Dendritic cell treated with granulocyte-macrophage colony-stimulating factor and Interleukin-4, amounts not matched to agents 40 ng/mL and 50 ng/mL, for 4 days (primary cell): ENCODE measurements at regions of chr5 and their contacts with region 1.

Region 1: DNA sequence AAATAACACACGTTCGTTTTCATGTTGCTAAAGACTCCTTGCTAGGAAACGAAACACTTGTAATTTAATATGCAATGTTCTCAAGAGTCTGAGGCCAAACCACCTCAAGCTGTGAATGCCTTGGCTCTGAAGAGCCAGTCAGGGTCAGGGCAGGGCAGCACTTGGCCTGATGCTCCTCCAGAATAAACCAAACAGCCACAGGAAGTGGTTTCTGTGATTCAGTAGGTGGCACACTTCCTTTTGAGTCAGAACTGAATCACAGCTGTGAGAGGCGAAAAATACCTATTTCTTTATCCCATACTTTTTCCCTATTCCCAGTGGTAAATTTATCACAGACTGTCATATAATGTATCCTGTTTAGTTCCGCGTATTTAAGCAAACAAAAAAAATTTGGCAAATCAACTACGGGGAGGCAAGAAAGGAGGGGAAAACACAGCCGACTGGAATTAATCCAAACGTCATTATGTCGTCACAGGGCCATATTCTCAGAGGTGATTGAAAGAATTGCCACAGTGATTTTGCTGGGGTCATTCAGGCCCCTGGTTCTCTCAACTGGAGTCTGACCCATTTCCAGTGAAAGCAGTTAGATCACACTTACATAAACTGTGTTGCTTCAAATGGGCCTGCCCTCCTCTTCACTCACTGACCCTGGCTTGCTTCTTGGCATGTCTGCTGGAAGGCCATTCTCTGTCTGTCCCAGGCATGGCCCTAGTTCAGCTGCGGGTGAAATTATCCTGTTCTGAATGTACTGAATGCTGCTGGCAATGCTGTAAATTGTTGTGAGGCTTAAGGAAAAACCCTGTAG is 71.2 kb downstream of the ARRDC3 start:
- H3K4me3 Mint-ChIP-seq: peak overlapping the region; percentile 42
- H3K27ac Mint-ChIP-seq: peak overlapping the region; percentile 94
- H3K4me1 Mint-ChIP-seq: peaks cover 57% of the 10 kb centered on the region
- H3K27me3 Mint-ChIP-seq: no peaks in the 10 kb centered on the region

Region 2: DNA sequence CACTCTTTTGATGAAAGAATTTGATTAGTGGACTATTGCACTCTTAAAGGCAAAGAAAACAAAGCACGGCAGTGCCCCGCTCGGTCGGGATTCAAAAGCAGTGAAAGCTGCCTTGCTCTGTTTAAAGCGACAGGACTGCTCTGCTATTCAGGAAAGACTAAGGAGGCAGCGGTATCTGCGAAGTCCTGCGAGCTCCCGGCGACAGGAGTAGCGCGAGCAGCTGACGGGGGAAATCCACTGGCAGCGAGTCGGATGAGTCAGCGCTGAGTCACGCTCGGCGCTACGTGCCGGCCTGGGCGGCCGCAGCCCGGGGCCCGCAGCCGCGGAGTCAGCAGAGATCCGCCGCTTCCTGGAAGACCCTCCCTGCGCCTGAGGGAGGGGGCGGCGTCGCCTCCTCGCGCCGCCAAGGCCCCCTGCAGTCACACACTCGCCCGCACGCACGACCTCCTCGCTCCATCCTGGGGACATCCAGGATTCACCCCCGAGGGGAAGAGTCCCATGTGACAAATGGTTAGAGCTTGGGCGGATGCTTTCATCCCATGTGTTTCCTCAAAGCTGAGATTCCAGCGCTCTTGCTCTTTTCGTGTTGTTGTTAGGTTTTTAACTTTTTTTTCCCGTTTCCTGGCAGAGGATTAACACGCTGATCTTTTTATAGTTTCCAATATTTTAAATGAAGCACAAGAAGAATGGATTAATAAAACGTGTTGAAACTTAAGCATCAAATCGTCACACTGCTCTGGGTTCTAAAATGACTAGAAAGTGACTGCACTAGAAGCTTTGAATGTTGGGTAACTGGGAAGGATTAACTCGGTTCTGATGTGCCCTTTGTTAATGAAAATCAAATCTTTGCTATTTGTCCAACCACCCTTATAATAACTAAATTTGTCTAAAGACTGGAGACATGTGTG is 31.3 kb before region 1 on chr5:
- intact Hi-C with region 1: loop called (anchors 2 kb)
- H3K4me3 Mint-ChIP-seq: peak overlapping the region; percentile 81
- H3K27ac Mint-ChIP-seq: peak overlapping the region; percentile 100
- H3K4me1 Mint-ChIP-seq: peaks cover 54% of the 10 kb centered on the region
- H3K27me3 Mint-ChIP-seq: peaks cover 1% of the 10 kb centered on the region

Region 3: DNA sequence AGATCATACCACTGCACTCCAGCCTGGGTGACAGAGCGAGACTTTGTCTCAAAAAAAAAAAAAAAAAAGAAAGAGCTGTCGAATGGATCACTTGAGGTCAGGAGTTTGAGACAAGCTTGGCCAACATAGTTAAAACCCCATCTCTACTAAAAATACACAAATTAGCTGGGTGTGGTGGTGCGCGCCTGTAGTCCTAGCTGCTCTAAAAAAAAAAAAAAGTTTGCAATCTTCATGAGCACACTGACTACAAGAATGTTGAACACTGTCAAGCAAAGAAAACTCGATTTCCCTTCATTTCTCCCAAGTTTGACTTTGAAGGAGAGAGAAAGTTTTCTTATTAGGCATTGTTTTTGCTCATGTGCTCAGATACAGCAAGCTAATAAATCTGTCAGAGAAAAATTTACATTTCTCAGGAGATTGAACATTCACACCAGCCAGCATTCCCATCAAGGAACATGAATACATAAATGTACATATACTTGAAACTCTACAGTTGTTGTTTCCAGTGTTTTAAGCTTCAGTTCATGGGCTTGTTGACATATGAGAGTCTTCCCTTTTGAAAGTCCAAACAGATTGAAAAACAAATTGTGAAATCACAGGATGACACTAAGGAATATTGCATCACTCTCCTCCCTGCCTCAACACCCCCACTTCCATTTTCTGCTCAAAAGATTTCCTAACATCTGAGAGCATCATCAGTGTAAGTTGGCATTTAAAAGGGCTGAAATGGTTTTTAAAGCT is 10.6 kb before region 1 on chr5:
- intact Hi-C with region 1: loop called (anchors 1 kb)
- H3K4me3 Mint-ChIP-seq: no peak overlapping the region
- H3K27ac Mint-ChIP-seq: peak overlapping the region; percentile 60
- H3K4me1 Mint-ChIP-seq: peaks cover 22% of the 10 kb centered on the region
- H3K27me3 Mint-ChIP-seq: no peaks in the 10 kb centered on the region

Region 4: GRCh38 chr5:91443023-91443422 is 131.1 kb after region 1 on chr5:
- intact Hi-C with region 1: no loop called
- H3K4me3 Mint-ChIP-seq: no peak overlapping the region
- H3K27ac Mint-ChIP-seq: no peak overlapping the region
- H3K4me1 Mint-ChIP-seq: no peaks in the 10 kb centered on the region
- H3K27me3 Mint-ChIP-seq: no peaks in the 10 kb centered on the region